Caco-2 (cell line): ENCODE measurements at regions of chrX and their contacts with region 1.

Region 1: GRCh38 chrX:13029341-13029740 is 15.1 kb downstream of the FAM9C start:
- DNase-seq: peak in 1 of 2 experiments; percentile 42
- H3K4me3 ChIP-seq: no peak overlapping the region
- H3K4me3 Mint-ChIP-seq: peak overlapping the region; percentile 62
- H3K27ac Mint-ChIP-seq: peak overlapping the region; percentile 96
- H3K4me1 ChIP-seq: peaks cover 58% of the 10 kb centered on the region
- H3K4me1 Mint-ChIP-seq: peaks cover 44% of the 10 kb centered on the region
- H3K27me3 ChIP-seq: no peaks in the 10 kb centered on the region
- H3K27me3 Mint-ChIP-seq: no peaks in the 10 kb centered on the region
- CTCF ChIP-seq: no peak

Region 2: DNA sequence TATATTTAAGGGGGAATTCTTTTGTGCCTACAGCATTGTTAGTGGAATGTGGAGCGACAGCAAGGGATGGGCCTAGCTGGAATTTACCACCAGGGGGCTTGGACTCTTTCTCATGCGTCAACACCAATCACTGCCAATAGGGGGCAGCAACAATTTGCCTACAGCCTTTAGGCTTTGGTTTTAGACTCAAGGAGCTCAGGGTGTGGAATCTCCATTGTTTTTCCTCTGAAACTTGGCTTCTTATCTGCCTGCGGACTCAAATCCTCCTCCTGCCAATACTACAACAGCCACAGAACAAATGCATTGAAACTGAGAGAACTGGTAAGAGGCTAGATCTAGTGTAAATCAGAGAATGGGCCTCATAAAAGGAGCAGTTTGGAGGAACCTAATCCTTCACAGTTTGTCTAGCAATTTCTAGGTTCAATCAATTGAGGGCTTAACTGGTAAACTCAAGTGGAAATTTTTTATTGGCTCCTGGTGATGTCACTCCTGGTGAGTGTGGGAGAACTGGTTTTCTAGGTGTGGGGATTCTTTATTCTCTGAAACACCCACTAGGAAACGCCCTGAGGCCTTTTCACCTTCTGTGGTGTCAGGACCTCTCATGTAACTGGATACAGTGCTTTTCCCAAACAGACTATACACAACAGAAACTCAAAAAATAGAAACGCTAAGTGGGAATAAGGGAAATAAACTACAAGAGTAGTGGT is 82.3 kb before region 1 on chrX:
- CTCF ChIA-PET with region 1: interaction called, 6 read pairs
- POLR2A ChIA-PET with region 1: no interaction called
- intact Hi-C with region 1: loop called (anchors 1 kb)
- DNase-seq: peak; percentile 77 to 81
- H3K4me3 ChIP-seq: no peak overlapping the region
- H3K4me3 Mint-ChIP-seq: no peak overlapping the region
- H3K27ac Mint-ChIP-seq: peak overlapping the region; percentile 81
- H3K4me1 ChIP-seq: peaks cover 24% of the 10 kb centered on the region
- H3K4me1 Mint-ChIP-seq: no peaks in the 10 kb centered on the region
- H3K27me3 ChIP-seq: no peaks in the 10 kb centered on the region
- H3K27me3 Mint-ChIP-seq: no peaks in the 10 kb centered on the region
- CTCF ChIP-seq: peak; percentile 83 to 86

Region 3: DNA sequence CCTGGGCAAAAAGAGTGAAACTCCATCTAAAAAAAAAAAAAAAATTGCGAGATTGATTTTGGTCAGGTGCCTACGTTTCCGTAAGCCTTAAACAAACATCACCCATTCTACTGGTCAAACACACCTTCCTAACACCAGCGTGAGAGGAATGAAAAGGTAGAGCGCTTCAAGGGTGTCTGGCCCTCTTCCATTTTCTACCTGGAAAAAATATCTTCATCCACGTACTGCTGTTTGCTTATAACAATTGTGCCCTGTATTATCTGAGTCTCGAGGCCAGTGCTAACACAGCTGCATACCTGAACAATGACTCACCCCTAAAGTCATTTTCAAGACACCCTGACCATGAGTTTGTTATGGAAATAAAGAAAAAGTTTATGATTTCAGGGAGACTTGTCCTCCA is 40.5 kb before region 1 on chrX:
- CTCF ChIA-PET with region 1: no interaction called
- POLR2A ChIA-PET with region 1: interaction called, 4 read pairs
- intact Hi-C with region 1: loop called (anchors 1 kb)
- DNase-seq: peak; percentile 70 to 71
- H3K4me3 ChIP-seq: no peak overlapping the region
- H3K4me3 Mint-ChIP-seq: peak overlapping the region; percentile 57
- H3K27ac Mint-ChIP-seq: peak overlapping the region; percentile 47
- H3K4me1 ChIP-seq: peaks cover 27% of the 10 kb centered on the region
- H3K4me1 Mint-ChIP-seq: peaks cover 13% of the 10 kb centered on the region
- H3K27me3 ChIP-seq: no peaks in the 10 kb centered on the region
- H3K27me3 Mint-ChIP-seq: no peaks in the 10 kb centered on the region
- CTCF ChIP-seq: no peak

Region 4: DNA sequence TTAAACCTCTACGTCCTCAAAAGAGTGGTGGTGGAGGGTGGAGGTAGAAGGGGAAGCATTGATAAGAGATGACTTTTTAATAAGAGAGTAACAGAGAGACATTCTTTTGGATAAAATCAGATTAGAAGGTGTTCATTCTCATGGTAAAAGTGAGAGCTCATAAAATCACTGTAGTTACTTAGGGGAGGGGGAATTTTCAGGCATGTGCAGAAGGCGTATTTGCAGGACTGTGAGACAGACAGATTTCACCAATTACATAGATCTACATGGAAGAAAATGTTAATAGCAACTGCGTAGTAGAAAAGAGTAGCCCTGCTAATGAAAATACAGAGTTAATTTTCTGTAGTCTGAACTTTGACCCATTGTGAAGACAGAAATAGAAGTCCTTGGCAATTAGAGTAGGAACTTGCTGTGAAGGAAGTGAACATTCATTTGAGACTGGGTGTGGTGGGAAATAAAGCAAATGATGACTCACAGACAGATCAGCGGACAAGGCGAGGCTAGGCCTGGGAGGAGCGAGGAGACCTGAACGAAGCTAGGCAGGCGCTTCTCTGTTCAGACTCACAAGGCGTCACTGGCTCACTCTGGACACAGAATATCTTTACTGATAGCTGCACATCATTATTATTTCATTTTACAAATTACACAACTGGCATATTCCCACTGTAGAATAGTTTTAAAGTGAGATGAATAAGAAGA is 72.2 kb after region 1 on chrX:
- CTCF ChIA-PET with region 1: no interaction called
- POLR2A ChIA-PET with region 1: no interaction called
- intact Hi-C with region 1: loop called (anchors 5 kb)
- DNase-seq: peak; percentile 21 to 50
- H3K4me3 ChIP-seq: no peak overlapping the region
- H3K4me3 Mint-ChIP-seq: peak overlapping the region; percentile 47
- H3K27ac Mint-ChIP-seq: peak overlapping the region; percentile 61
- H3K4me1 ChIP-seq: peaks cover 14% of the 10 kb centered on the region
- H3K4me1 Mint-ChIP-seq: peaks cover 9% of the 10 kb centered on the region
- H3K27me3 ChIP-seq: no peaks in the 10 kb centered on the region
- H3K27me3 Mint-ChIP-seq: no peaks in the 10 kb centered on the region
- CTCF ChIP-seq: no peak

Region 5: DNA sequence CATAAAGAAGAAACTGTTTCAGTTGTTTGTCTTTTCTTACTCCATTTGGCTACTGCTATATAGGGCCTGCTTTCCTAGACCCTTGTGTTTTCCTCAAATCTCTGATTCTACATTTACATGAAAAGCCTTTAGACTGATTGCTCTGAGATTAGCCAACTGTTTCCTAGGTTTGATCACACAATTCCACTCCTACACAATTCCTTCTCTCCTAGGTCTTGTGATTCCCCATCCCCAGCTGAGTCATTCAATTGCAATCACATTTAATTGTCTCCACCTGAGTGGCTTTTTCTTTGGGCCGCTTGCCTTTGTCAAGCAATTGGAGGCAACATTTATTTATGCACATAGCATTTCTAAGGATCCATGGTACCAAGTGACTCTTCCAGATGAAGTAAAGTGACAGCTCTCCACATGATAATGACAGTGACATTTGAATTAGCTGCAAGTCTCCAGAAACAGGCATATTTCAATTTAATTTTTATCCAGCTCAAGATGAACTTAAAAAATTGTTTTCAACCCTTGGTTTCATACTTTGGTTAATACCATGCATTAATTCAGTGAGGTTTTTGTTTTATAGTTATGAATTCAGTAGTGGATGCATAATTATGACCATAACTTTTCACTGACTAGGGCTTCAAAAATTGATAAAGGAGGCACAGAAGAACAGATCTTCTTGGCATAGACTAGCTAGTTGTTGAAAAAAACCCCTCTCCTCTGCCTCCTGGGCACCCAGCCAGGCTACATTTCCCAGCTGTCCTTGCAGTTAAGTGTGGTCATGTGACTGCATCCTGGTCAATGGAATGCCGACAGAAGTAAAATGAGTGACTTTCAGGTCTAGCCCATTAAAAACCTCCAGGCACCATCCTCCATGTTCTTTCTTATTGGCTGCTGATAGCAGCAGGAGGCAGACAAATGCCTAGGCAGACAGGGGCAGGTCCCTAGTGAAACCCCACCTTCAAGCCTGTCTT is 254.9 kb after region 1 on chrX:
- CTCF ChIA-PET with region 1: no interaction called
- POLR2A ChIA-PET with region 1: no interaction called
- intact Hi-C with region 1: loop called (anchors 5 kb)
- DNase-seq: no peak
- H3K4me3 ChIP-seq: no peak overlapping the region
- H3K4me3 Mint-ChIP-seq: no peak overlapping the region
- H3K27ac Mint-ChIP-seq: no peak overlapping the region
- H3K4me1 ChIP-seq: peaks cover 27% of the 10 kb centered on the region
- H3K4me1 Mint-ChIP-seq: peaks cover 9% of the 10 kb centered on the region
- H3K27me3 ChIP-seq: no peaks in the 10 kb centered on the region
- H3K27me3 Mint-ChIP-seq: no peaks in the 10 kb centered on the region
- CTCF ChIP-seq: no peak